Activated T-helper 2 cell treated with anti-CD3 and anti-CD28 coated beads, Interferon-gamma antibody, Interleukin-2, Interleukin-4, amounts not matched to agents 10 μg/mL and 5 μg/mL and 100 μg/mL, durations not matched to agents 14 hours and 24 hours and 36 hours (primary cell): ENCODE measurements at regions of chr3 and their contacts with region 1.

Region 1: GRCh38 chr3:114242947-114243346 is 5.6 kb upstream of the ZNF80 start:
- DNase-seq: no peak
- H3K4me3 Mint-ChIP-seq: no peak overlapping the region
- H3K27ac Mint-ChIP-seq: peak overlapping the region; percentile 29
- H3K4me1 Mint-ChIP-seq: peaks cover 31% of the 10 kb centered on the region
- H3K27me3 Mint-ChIP-seq: no peaks in the 10 kb centered on the region

Region 2: DNA sequence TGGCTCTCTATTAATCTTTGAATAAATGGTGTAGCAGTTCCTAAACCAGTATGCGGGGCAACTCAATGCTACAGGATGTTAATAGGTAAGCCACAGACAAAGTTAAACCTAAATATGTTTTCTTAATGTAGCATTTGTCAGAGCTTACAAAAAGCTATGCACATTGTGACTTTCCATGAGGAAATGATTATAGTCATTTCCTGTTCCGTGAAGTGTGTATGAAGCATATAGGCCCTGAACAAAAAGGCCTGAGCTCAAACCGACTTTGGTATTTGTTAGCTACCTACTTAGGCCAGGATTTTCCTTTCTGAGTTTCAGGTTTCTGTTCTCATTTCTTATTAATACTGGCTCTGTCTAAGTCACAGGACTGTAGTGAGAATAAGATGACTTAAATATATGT is 19.8 kb before region 1 on chr3:
- intact Hi-C with region 1: loop called (anchors 1 kb)
- DNase-seq: no peak
- H3K4me3 Mint-ChIP-seq: peak overlapping the region; percentile 37
- H3K27ac Mint-ChIP-seq: peak overlapping the region; percentile 91
- H3K4me1 Mint-ChIP-seq: peaks cover 79% of the 10 kb centered on the region
- H3K27me3 Mint-ChIP-seq: no peaks in the 10 kb centered on the region

Region 3: GRCh38 chr3:114252954-114253353 is 10.0 kb after region 1 on chr3:
- intact Hi-C with region 1: loop called (anchors 1 kb)
- DNase-seq: no peak
- H3K4me3 Mint-ChIP-seq: no peak overlapping the region
- H3K27ac Mint-ChIP-seq: no peak overlapping the region
- H3K4me1 Mint-ChIP-seq: peaks cover 10% of the 10 kb centered on the region
- H3K27me3 Mint-ChIP-seq: no peaks in the 10 kb centered on the region

Region 4: GRCh38 chr3:114290911-114291901 is 48.3 kb after region 1 on chr3:
- intact Hi-C with region 1: loop called (anchors 5 kb)
- DNase-seq: peak; percentile 69
- H3K4me3 Mint-ChIP-seq: peak overlapping the region; percentile 13
- H3K27ac Mint-ChIP-seq: peak overlapping the region; percentile 84
- H3K4me1 Mint-ChIP-seq: peaks cover 31% of the 10 kb centered on the region
- H3K27me3 Mint-ChIP-seq: no peaks in the 10 kb centered on the region

Region 5: GRCh38 chr3:114308830-114309229 is 65.9 kb after region 1 on chr3:
- intact Hi-C with region 1: loop called (anchors 2 kb)
- DNase-seq: no peak
- H3K4me3 Mint-ChIP-seq: no peak overlapping the region
- H3K27ac Mint-ChIP-seq: peak overlapping the region; percentile 93
- H3K4me1 Mint-ChIP-seq: peaks cover 43% of the 10 kb centered on the region
- H3K27me3 Mint-ChIP-seq: no peaks in the 10 kb centered on the region